ENCODE measurements at regions of chr17 and their contacts with region 1.

Region 1: DNA sequence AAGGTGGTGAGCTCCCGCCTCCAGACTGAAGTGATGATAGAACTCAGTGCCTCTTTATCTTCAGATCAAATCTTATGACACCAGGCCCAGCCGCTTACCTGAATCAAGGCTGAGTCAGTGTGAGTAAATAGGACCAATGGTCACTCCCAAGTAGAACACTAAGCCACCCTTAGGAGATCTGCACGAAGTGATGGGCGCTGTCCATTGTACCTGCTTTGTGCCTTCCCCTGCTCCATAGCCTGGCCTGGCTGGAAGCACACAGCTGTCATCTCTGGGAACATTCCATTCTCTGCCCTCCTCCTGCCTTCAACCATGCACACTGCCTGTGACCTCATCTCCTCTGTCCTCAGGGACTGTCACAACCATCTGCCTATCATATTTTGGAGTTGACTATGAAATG is 279.5 kb upstream of the ASIC2 start:
- DNase-seq: no peak

Region 2: DNA sequence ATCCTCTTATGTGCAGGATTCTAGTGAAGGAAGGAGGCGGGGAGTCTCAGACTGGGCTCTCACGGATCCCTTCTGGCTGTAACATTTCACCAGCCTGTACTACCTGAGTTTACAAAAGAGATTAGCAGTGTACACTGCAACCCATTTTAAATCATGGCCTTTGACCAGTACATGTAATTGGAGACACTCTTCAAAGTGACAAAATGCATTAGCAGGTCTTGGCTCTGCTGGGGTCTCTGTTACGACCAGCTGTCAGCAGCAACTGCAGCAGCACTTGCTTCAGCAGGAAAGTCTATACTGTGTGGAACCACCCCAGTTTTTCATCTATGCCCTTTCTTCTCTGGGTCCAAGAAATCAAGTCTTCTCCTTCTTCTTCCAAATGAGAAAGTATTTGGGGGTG is 43.3 kb after region 1 on chr17:
- intact Hi-C with region 1: loop called in 1 of 2 experiments (anchors 2 kb)
- DNase-seq: no peak